Activated T-helper 2 cell treated with anti-CD3 and anti-CD28 coated beads, Interferon-gamma antibody, Interleukin-2, Interleukin-4, amounts not matched to agents 10 μg/mL and 5 μg/mL and 100 μg/mL, durations not matched to agents 14 hours and 24 hours and 36 hours (primary cell): ENCODE measurements at regions of chr5 and their contacts with region 1.

Region 1: GRCh38 chr5:157476702-157477408 is 16.8 kb downstream of the NIPAL4 start:
- DNase-seq: no peak
- H3K4me3 Mint-ChIP-seq: no peak overlapping the region
- H3K27ac Mint-ChIP-seq: peak overlapping the region; percentile 24
- H3K4me1 Mint-ChIP-seq: peaks cover 42% of the 10 kb centered on the region
- H3K27me3 Mint-ChIP-seq: no peaks in the 10 kb centered on the region

Region 2: GRCh38 chr5:157328277-157328912 is 148.5 kb before region 1 on chr5:
- intact Hi-C with region 1: loop called (anchors 2 kb)
- DNase-seq: peak; percentile 52
- H3K4me3 Mint-ChIP-seq: no peak overlapping the region
- H3K27ac Mint-ChIP-seq: peak overlapping the region; percentile 14
- H3K4me1 Mint-ChIP-seq: peaks cover 32% of the 10 kb centered on the region
- H3K27me3 Mint-ChIP-seq: no peaks in the 10 kb centered on the region

Region 3: DNA sequence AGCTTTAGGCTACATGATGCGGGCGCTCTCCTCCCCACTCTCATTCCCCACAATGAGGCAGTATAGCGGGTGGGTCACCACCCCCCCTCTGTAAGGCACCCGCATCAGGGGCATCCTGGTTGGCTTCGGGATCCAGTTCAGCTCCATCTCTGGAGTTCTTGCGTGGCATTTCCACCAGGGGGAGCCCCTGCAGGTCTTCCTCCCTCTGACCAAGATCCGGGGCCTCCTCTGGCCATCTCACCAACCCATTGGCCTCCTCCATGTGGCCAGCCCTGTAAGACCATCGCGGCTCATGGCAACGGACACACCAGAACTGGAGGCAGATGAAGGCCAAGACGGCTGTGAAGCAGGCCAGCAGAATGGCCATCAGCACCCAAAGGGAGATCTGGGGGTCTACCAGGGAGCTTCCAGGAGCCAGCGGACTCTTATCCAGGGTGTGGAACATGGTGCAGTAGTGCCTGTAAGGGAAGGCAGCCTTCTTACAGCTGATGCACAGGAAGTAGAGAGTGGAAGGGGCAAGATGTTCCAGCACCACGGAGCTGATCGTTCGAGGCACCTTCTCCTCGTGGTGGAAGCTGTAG is 133.9 kb before region 1 on chr5:
- intact Hi-C with region 1: loop called (anchors 5 kb)
- DNase-seq: no peak
- H3K4me3 Mint-ChIP-seq: no peak overlapping the region
- H3K27ac Mint-ChIP-seq: peak overlapping the region; percentile 6
- H3K4me1 Mint-ChIP-seq: peaks cover 29% of the 10 kb centered on the region
- H3K27me3 Mint-ChIP-seq: no peaks in the 10 kb centered on the region

Region 4: DNA sequence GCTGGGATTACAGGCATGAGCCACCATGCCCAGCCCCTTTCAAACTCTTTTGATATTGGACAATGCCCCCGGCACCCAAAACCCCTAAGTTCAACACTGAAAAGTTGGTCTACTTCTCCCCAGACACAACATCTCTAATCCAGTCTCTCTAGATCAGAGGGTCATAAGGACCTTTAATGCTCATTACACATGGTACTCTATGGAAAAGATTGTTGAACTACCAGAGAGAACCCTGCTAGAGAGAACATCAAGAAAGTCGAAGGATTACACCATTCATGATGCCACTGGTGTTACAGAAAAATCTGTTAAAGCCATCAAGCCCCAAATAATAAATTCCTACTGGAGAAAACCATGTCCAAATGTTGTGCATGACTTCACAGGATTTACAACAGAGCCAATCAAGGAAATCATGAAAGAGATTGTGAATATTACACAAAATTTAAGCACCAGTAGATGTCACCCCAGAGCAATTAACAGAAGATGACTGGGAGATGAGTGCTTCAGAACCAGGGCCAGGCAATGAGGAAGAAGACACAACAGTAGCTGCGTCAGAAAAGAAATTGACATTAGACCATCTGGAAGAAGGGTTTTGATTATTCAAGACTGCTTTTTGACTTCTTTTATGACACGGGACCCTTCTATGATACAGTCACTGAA is 45.2 kb before region 1 on chr5:
- intact Hi-C with region 1: loop called (anchors 1 kb)
- DNase-seq: peak; percentile 20
- H3K4me3 Mint-ChIP-seq: no peak overlapping the region
- H3K27ac Mint-ChIP-seq: no peak overlapping the region
- H3K4me1 Mint-ChIP-seq: peaks cover 12% of the 10 kb centered on the region
- H3K27me3 Mint-ChIP-seq: peaks cover 28% of the 10 kb centered on the region

Region 5: DNA sequence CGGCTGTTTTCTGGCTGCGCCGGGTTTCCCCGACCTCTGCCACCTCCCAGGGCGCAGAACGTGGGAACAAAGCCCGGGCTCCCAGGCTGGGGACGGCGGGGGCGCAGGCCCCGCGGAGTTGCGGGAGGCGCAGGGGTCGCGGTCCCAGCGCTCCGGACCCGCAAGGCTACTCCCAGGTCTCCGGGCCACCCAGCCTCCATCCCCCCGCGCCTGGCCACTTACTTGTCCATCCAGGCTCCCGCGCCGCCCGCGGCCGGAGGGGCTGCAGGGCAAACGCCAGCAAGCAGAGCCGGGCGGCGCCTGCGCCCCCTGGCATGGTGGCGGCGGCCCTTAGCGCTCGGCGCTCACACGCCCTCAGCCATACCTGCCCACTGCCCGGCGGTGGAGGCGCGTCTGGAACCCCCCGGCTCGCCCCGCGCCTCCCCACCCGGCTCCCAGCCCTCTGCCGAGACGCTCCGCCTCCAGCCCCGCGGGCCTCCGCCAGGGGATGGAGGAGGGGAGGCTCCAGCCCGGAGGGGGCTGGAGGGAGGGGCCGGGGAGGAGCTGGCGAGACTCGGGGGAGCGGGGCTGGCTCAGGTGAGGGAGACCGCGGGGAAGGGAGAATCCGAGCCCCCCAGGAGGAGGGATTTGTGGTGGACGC is 98.6 kb after region 1 on chr5 and contains the start of gene ADAM19:
- intact Hi-C with region 1: no loop called
- DNase-seq: peak; percentile 43
- H3K4me3 Mint-ChIP-seq: peak within 1 kb of the TSS; percentile 94
- H3K27ac Mint-ChIP-seq: peak within 1 kb of the TSS; percentile 84
- H3K4me1 Mint-ChIP-seq: peaks cover 62% of the 10 kb centered on the region
- H3K27me3 Mint-ChIP-seq: no peaks in the 10 kb centered on the region
- total RNA-seq, gene ADAM19: 229 and 237 TPM in 2 replicates